ENCODE measurements at regions of chr1 and their contacts with region 1.

Region 1: DNA sequence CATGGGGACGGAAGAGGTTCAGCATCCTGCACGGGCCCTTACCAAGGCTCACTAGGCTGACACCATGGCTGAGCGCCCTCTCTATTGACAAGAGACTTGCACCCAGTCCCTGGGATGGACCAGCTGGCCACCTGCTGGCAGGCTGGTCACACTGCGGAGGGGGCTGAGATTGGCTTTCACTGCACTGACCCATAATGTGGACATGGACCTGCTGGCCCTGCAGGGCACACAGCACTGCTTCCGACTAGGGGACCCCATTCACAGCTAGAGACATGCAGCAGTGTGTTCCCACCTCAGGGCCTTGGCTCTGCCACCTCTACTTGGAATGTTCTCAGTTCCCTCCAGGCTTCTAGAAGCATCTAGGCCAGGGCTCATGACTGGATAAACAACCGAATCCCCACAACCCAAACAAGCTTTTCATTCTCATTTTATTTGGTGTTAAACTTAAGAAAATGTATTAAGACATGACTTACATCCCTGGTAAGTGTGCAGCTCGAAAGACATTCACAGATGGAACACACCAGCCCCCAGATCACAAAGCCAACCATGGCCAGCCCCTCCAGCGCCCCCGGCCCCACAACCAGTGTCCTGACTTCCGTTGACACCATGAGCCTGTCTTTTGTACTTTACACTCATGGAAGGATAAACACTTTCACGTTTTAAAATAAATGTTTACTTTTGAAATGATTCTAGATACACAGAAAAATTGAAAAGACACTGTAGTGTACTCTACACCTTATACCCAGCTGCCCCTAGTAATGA is 9.3 kb upstream of the SRARP start:
- DNase-seq: peak; percentile 39 to 60
- ATAC-seq: peak; percentile 45 to 80 (median 75)
- H3K4me3 ChIP-seq: no peak overlapping the region
- H3K4me3 Mint-ChIP-seq: no peak overlapping the region
- H3K27ac ChIP-seq: no peak overlapping the region
- H3K27ac Mint-ChIP-seq: no peak overlapping the region
- H3K4me1 ChIP-seq: no peaks in the 10 kb centered on the region
- H3K4me1 Mint-ChIP-seq: no peaks in the 10 kb centered on the region
- H3K27me3 ChIP-seq: no peaks in the 10 kb centered on the region
- H3K27me3 Mint-ChIP-seq: peaks cover 7 to 13% of the 10 kb centered on the region in 2 donors
- CTCF ChIP-seq: peak; percentile 43

Region 2: DNA sequence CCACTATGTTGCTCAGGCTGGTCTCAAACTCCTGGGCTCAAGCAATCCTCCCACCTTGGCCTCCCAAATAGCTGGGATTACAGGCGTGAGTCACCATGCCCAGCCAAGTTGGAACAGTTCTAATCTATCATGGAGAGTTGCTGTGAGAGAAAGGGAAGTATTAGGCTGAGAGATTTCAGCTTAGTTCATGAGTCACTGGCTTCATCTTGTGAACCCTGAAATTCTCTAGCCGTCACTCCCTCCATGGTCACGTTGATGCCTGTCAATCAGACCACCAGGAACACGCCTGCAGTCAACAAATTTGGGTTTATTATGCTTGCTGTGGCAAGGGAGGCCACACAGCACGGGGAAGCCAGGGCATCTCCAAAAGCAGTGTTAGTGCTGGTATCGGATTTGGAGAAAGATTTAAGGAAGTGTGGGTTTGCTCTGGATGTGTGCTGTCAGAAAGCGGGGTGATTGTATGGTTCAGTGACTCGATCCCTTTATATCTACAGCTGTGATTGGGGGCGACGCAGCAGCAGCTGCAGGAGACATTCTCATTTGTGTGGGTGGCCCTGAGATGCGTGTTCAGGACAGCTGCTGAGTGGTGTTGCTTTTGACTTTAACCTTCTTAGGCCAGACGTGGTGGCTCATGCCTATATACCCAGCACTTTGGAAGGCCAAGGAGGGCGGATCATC is 206.0 kb before region 1 on chr1:
- intact Hi-C with region 1: loop called (anchors 2 kb)
- DNase-seq: no peak
- ATAC-seq: no peak
- H3K4me3 ChIP-seq: no peak overlapping the region
- H3K4me3 Mint-ChIP-seq: no peak overlapping the region
- H3K27ac ChIP-seq: no peak overlapping the region
- H3K27ac Mint-ChIP-seq: no peak overlapping the region
- H3K4me1 ChIP-seq: peaks cover 5% of the 10 kb centered on the region
- H3K4me1 Mint-ChIP-seq: peaks cover 5% of the 10 kb centered on the region in 2 donors
- H3K27me3 ChIP-seq: no peaks in the 10 kb centered on the region
- H3K27me3 Mint-ChIP-seq: peaks cover 0 to 5% of the 10 kb centered on the region in 2 donors
- CTCF ChIP-seq: no peak

Region 3: DNA sequence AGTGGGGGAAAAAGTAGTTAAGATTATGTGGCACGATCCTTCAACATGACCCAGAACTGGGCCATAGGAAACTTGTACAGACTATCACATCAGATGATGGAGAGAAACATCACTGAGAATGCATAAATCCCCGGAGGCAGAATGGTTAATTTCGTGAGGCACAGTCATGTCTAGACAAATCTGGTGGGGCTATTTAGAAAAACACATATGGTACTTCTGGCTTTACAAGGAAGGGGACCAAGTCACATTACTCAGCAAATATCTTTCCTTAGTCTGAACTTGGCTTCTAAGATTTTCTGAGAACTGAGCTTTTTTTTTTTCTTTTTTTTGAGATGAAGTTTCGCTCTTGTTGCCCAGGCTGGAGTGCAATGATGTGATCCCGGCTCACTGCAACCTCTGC is 178.1 kb before region 1 on chr1:
- intact Hi-C with region 1: loop called (anchors 5 kb)
- DNase-seq: no peak
- ATAC-seq: no peak
- H3K4me3 ChIP-seq: no peak overlapping the region
- H3K4me3 Mint-ChIP-seq: no peak overlapping the region
- H3K27ac ChIP-seq: no peak overlapping the region
- H3K27ac Mint-ChIP-seq: no peak overlapping the region
- H3K4me1 ChIP-seq: no peaks in the 10 kb centered on the region
- H3K4me1 Mint-ChIP-seq: peaks cover 5% of the 10 kb centered on the region in 2 donors
- H3K27me3 ChIP-seq: no peaks in the 10 kb centered on the region
- H3K27me3 Mint-ChIP-seq: no peaks in the 10 kb centered on the region
- CTCF ChIP-seq: no peak

Region 4: DNA sequence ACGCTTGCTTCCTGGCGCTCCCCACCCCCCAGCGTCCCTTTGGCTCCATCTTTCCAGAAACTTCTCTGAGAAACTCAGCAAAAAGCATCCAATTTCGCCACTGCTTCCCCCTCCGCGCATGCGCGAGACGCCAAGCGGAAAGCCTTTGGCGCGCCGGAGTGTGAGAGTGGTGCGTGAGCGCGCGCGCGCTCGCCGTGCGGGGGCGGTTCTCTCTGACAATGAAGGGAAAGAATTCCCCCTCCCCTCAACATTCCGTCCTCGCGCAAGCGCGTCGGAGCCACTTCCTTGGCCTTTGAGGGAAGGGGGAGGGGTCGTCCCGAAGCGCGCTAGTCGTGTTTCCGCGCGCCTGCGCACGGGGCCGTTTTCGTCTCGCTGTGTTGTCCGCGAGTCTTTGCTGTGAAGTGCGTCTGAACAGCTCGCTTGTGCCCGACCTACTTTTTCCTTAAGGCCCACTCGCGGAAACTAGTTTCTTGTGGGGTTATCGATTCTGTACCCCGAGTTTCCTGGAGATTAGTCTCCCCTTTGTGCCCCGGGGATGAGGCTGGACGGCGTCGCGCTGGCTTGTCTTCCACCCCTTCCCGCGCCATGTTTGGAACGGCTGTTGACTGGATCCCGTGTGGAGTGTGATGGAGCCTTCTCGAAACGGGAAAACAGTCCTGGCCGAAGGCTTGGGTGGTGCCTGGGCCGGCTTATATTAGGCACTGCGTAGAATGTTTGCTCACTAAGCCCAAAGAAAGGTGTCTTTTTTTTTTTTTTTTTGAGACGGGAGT is 158.8 kb before region 1 on chr1:
- intact Hi-C with region 1: no loop called
- DNase-seq: peak; percentile 96 to 100
- ATAC-seq: peak; percentile 51 to 77 (median 58)
- H3K4me3 ChIP-seq: peak overlapping the region; percentile 80
- H3K4me3 Mint-ChIP-seq: peak overlapping the region; percentile 96
- H3K27ac ChIP-seq: peak overlapping the region; percentile 96
- H3K27ac Mint-ChIP-seq: peak overlapping the region; percentile 95 to 99
- H3K4me1 ChIP-seq: peaks cover 32% of the 10 kb centered on the region
- H3K4me1 Mint-ChIP-seq: peaks cover 30 to 35% of the 10 kb centered on the region in 2 donors
- H3K27me3 ChIP-seq: no peaks in the 10 kb centered on the region
- H3K27me3 Mint-ChIP-seq: no peaks in the 10 kb centered on the region
- CTCF ChIP-seq: no peak

Measured in natural killer cell (primary cell).